AG04449 (cell line): ENCODE measurements at regions of chr2 and their contacts with region 1.

Region 1: DNA sequence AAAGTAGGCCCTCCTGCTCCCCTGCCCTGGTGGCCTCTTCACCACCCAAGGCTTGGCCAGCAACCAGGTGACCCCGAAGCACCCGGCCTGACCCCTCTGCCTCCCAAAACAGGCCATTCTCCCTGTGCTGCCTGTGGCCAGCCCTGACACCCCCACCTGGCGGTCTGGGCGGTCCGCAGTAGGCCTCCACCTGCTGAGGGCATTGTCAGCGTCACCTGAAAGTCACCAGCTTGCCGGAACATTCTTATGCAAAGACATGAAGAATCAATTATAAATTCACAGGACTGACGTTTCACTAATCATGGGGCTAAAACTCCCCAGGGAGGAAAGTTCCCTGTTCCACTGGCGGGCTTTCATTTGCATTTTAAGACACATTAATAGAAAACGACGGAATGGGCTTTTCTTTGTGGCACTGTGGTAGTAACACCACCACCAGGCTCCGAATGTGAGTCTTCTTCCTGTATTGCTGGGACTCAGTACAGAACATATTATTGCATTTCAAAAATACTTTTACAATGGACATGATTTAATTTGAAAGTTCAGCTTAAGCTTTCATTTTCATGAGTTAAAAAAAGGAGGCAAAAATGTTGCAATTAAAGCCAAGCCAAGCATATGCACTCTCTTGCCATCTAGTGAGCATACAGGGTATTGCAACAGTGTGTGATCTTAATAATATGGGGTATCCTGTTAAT is 57.4 kb downstream of the ADI1 start:
- DNase-seq: no peak
- H3K4me3 ChIP-seq: no peak overlapping the region
- CTCF ChIP-seq: peak; percentile 67

Region 2: GRCh38 chr2:3242747-3243369 is 219.1 kb before region 1 on chr2:
- CTCF ChIA-PET with region 1: no interaction called
- POLR2A ChIA-PET with region 1: no interaction called
- DNase-seq: no peak
- H3K4me3 ChIP-seq: no peak overlapping the region
- CTCF ChIP-seq: no peak

Region 3: GRCh38 chr2:3356799-3357198 is 105.1 kb before region 1 on chr2:
- CTCF ChIA-PET with region 1: no interaction called
- POLR2A ChIA-PET with region 1: no interaction called
- DNase-seq: no peak
- H3K4me3 ChIP-seq: no peak overlapping the region
- CTCF ChIP-seq: no peak

Region 4: DNA sequence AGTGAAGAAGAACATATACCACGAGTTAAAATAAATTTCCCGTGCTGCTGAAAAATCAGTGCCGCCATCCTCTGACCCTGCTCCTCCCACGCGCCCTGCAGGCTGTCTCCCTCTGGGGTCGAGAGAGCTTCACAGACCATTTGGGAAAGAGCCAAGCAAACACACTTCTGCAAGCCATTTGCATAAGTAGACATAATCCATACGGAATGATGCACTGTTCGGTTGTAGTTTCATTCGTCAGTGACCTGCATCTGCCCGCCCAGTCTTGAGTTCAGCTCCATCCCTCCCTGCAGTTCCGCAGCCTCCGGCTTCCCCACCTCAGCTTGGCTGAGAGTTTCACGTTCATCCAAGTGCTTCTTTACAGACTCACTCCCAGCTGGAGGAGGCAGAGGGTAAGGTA is 12.9 kb before region 1 on chr2:
- CTCF ChIA-PET with region 1: interaction called, 27 read pairs
- POLR2A ChIA-PET with region 1: no interaction called
- DNase-seq: no peak
- H3K4me3 ChIP-seq: no peak overlapping the region
- CTCF ChIP-seq: no peak

Region 5: GRCh38 chr2:3472966-3473365 is 11.0 kb after region 1 on chr2:
- CTCF ChIA-PET with region 1: interaction called, 26 read pairs
- POLR2A ChIA-PET with region 1: no interaction called
- DNase-seq: no peak
- H3K4me3 ChIP-seq: no peak overlapping the region
- CTCF ChIP-seq: no peak

Region 6: DNA sequence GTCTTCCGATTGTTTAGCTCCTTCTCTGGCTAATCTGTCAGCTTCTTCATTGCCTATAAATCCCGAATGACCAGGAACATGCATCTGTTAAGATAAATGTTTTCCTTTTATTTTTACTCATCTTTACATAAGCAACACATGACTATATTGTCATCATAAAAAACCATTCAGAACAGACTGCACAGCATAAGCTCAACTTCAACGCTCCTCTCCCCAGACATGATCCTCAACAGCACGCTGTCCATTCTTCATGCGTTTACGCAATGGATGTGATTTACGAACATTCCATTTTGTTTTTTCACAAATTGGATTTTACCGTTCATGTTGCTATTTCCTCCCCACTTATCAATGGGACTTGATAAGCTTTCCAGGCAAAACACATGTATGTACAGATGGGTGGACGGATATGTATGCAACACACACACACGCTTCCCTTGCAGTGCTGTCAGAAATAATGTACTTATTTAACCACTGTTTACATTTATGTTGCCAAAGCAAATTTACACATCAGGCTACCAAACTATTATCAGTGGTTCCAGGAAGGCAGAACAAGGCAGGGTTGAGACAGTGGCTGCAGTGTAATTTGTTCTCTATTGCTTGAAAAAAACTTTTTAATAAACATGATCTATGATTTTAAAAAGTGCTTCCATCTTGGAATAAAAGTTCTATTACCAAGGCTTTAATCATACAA is 84.0 kb after region 1 on chr2:
- CTCF ChIA-PET with region 1: no interaction called
- POLR2A ChIA-PET with region 1: no interaction called
- DNase-seq: no peak
- H3K4me3 ChIP-seq: no peak overlapping the region
- CTCF ChIP-seq: no peak